A549 (cell line): ENCODE measurements at regions of chr1 and their contacts with region 1.

Region 1: GRCh38 chr1:43171876-43172526 is at the starts of genes CFAP57 and EBNA1BP2:
- DNase-seq: peak; percentile 87 to 91
- ATAC-seq: peak; percentile 96 to 99
- H3K4me3 ChIP-seq: peak within 1 kb of the TSS; percentile 84
- H3K27ac ChIP-seq: peak within 1 kb of the TSS; percentile 85 to 95
- H3K4me1 ChIP-seq: peaks cover 10% of the 10 kb centered on the region; the same call in 2 of the 3 replicates
- CTCF ChIP-seq: no peak
- EP300 ChIP-seq: no peak
- POLR2A ChIP-seq: peak; percentile 75
- RAD21 ChIP-seq: no peak
- polyA plus RNA-seq, gene CFAP57: 0.80 and 1.3 TPM in 2 replicates
- polyA plus RNA-seq, gene EBNA1BP2: 84.9 and 109 TPM in 2 replicates

Region 2: GRCh38 chr1:43206600-43207228 is 34.7 kb after region 1 on chr1:
- CTCF ChIA-PET with region 1: no interaction called
- POLR2A ChIA-PET with region 1: interaction called, 19 read pairs
- DNase-seq: peak; percentile 66 to 95
- ATAC-seq: peak; percentile 96 to 99
- H3K4me3 ChIP-seq: peak overlapping the region; percentile 32
- H3K27ac ChIP-seq: peak overlapping the region; percentile 89 to 92
- H3K4me1 ChIP-seq: peaks cover 26% of the 10 kb centered on the region
- CTCF ChIP-seq: no peak
- EP300 ChIP-seq: peak; percentile 31 to 69; a peak in 2 of 5 replicates
- POLR2A ChIP-seq: peak; percentile 7; the same call in 1 of the 2 replicates
- RAD21 ChIP-seq: 0 out of 5 replicates have a peak, but pooled peaks of 1 of the 2 experiments have one; percentile 6